ENCODE measurements at regions of chr19 and their contacts with region 1.

Region 1: GRCh38 chr19:15136246-15136954 is 29.2 kb downstream of the SYDE1 start:
- DNase-seq: peak; percentile 82
- ATAC-seq: peak; percentile 94
- H3K4me3 ChIP-seq: no peak overlapping the region
- H3K27ac ChIP-seq: no peak overlapping the region
- H3K4me1 ChIP-seq: peaks cover 13% of the 10 kb centered on the region
- H3K27me3 ChIP-seq: no peaks in the 10 kb centered on the region
- CTCF ChIP-seq: no peak
- POLR2A ChIP-seq: no peak
- RAD21 ChIP-seq: no peak

Region 2: DNA sequence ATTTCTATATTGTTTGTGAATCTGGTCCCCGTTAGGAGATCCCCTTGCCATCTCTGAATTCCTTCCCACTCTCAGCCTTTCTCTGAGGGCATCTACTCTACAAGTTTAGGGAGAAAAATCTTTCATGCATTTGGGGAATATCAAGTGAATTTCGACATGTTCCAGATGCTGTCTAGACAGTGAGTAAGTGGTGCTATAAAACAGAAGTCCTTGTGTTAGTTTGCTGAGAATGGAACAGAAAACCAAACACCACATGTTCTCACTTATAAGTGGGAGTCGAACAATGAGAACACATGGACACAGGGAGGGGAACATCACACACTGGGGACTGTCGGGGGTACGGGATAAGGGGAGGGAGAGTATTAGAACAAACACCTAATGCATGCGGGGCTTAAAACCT is 292.8 kb before region 1 on chr19:
- CTCF ChIA-PET with region 1: no interaction called
- POLR2A ChIA-PET with region 1: no interaction called
- dilution Hi-C with region 1: no loop called
- in situ Hi-C with region 1: no loop called
- intact Hi-C with region 1: no loop called
- DNase-seq: no peak
- ATAC-seq: no peak
- H3K4me3 ChIP-seq: no peak overlapping the region
- H3K27ac ChIP-seq: no peak overlapping the region
- H3K4me1 ChIP-seq: no peaks in the 10 kb centered on the region
- H3K27me3 ChIP-seq: no peaks in the 10 kb centered on the region
- CTCF ChIP-seq: no peak
- POLR2A ChIP-seq: no peak
- RAD21 ChIP-seq: no peak

Region 3: GRCh38 chr19:15125232-15126067 is 10.9 kb before region 1 on chr19:
- CTCF ChIA-PET with region 1: interaction called, 3 read pairs
- POLR2A ChIA-PET with region 1: interaction called, 5 read pairs
- dilution Hi-C with region 1: no loop called
- in situ Hi-C with region 1: no loop called
- intact Hi-C with region 1: loop called (anchors 1 kb)
- DNase-seq: peak; percentile 95
- ATAC-seq: peak; percentile 94
- H3K4me3 ChIP-seq: peak overlapping the region; percentile 78
- H3K27ac ChIP-seq: peak overlapping the region; percentile 93
- H3K4me1 ChIP-seq: peaks cover 6% of the 10 kb centered on the region
- H3K27me3 ChIP-seq: no peaks in the 10 kb centered on the region
- CTCF ChIP-seq: no peak; the same call in 1 of the 2 replicates
- POLR2A ChIP-seq: no peak
- RAD21 ChIP-seq: no peak

Measured in IMR-90 (cell line).